GM12878 (cell line): ENCODE measurements at regions of chr17 and their contacts with region 1.

Region 1: GRCh38 chr17:75199886-75200618 is 5.4 kb upstream of the NUP85 start:
- DNase-seq: no peak
- ATAC-seq: no peak
- H3K4me3 ChIP-seq: no peak overlapping the region
- H3K27ac ChIP-seq: no peak overlapping the region
- H3K4me1 ChIP-seq: no peaks in the 10 kb centered on the region; the same call in 1 of the 2 replicates
- H3K27me3 ChIP-seq: no peaks in the 10 kb centered on the region
- CTCF ChIP-seq: no peak
- EP300 ChIP-seq: no peak
- POLR2A ChIP-seq: no peak
- RAD21 ChIP-seq: no peak

Region 2: DNA sequence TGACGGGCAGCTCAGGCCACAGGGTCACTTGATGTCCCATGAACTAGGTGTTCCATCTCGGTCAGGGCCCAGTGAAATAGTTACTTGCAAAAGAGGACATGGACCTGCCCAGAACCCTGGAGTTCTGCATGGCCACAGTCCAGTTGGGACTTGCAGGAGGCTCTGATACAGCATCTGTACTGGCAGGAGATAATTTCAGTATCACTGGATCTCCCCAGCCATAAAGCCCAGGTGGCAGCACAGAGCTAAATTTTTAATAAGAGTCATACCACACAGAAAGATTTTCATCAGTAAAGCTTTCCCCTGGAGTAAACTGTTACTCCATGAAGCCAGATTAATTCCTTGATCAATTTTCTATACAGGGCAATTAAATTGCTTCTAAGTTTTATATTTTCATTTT is 130.3 kb before region 1 on chr17:
- CTCF ChIA-PET with region 1: interaction called, 19 read pairs
- POLR2A ChIA-PET with region 1: no interaction called
- RAD21 ChIA-PET with region 1: interaction called, 13 read pairs
- SMC1A ChIA-PET with region 1: interaction called, 4 read pairs
- in situ Hi-C with region 1: no loop called
- intact Hi-C with region 1: no loop called
- DNase-seq: no peak
- ATAC-seq: peak; percentile 68
- H3K4me3 ChIP-seq: no peak overlapping the region
- H3K27ac ChIP-seq: no peak overlapping the region
- H3K4me1 ChIP-seq: peaks cover 15% of the 10 kb centered on the region
- H3K27me3 ChIP-seq: no peaks in the 10 kb centered on the region
- CTCF ChIP-seq: peak in 2 of 3 experiments; percentile 35 to 50; a peak in 4 of 6 replicates
- EP300 ChIP-seq: no peak
- POLR2A ChIP-seq: no peak
- RAD21 ChIP-seq: 0 out of 2 replicates have a peak, but pooled peaks have one; percentile 24

Region 3: DNA sequence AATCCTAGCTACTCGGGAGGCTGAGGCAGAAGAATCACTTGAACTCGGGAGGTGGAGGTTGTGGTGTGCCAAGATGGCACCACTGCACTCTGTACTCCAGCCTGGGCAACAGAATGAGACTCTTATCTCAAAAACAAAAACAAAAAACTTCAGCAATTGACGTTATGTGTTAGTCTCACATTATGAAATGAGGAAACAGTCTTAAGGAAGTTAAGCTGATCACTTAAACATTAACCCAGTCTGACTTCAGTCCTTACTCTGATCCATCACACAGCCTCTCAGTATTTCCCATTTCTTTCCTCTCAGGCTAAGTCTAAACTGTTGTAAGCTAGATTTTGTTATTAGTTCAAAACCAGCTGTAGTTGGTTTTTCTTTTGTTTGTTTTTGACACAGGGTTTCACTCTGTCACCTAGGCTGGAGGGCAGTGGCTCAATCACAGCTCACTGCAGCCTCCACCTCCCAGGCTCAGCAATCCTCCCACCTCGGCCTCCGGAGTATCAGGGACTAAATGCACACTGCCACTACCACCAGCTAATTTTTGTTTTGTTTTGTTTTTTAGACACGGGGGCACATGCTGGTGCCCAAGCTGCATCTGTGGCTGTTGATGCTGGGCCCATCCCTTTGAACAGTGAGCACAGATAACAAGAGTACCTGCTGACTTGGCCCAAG is 52.0 kb before region 1 on chr17:
- CTCF ChIA-PET with region 1: interaction called, 10 read pairs
- POLR2A ChIA-PET with region 1: interaction called, 4 read pairs
- RAD21 ChIA-PET with region 1: no interaction called
- SMC1A ChIA-PET with region 1: interaction called, 3 read pairs
- in situ Hi-C with region 1: no loop called
- intact Hi-C with region 1: no loop called
- DNase-seq: no peak
- ATAC-seq: peak; percentile 26; the same call in 2 of the 3 replicates
- H3K4me3 ChIP-seq: no peak overlapping the region
- H3K27ac ChIP-seq: no peak overlapping the region
- H3K4me1 ChIP-seq: no peaks in the 10 kb centered on the region
- H3K27me3 ChIP-seq: no peaks in the 10 kb centered on the region
- CTCF ChIP-seq: no peak
- EP300 ChIP-seq: no peak
- POLR2A ChIP-seq: no peak
- RAD21 ChIP-seq: no peak